HCT116 (cell line): ENCODE measurements at regions of chr6 and their contacts with region 1.

Region 1: GRCh38 chr6:136317021-136317694 is 27.5 kb upstream of the BCLAF1 start:
- DNase-seq: peak; percentile 71
- ATAC-seq: peak; percentile 95
- H3K4me3 ChIP-seq: no peak overlapping the region
- H3K27ac ChIP-seq: no peak overlapping the region
- H3K4me1 ChIP-seq: peaks cover 0 to 3% of the 10 kb centered on the region in 2 experiments; a peak in 1 of 4 replicates
- H3K27me3 ChIP-seq: no peaks in the 10 kb centered on the region
- CTCF ChIP-seq: peak; percentile 48 to 87 (median 77); a peak in 5 of 6 replicates
- POLR2A ChIP-seq: no peak
- RAD21 ChIP-seq: peak; percentile 84

Region 2: DNA sequence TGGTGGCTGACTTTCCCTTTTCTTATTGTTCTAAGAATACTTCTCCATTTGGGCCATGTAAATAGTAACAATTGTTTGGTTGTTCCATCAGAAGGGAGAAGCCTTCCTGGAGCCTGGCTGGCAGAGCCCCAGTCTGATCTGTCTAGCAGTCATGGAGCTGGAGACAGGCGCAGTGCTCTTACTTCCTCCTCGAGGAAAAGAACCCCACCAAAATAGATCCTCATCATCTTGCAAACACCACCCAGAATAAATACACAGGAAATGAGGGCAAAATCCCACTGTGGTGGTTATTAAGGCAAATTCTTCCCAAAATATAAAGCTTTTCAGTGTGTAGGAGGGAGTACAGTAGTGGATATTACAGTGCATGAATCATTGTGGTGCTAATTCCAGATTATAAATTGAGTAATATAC is 1804.2 kb before region 1 on chr6:
- CTCF ChIA-PET with region 1: no interaction called
- POLR2A ChIA-PET with region 1: no interaction called
- RAD21 ChIA-PET with region 1: no interaction called
- intact Hi-C with region 1: no loop called
- DNase-seq: no peak
- ATAC-seq: no peak
- H3K4me3 ChIP-seq: no peak overlapping the region
- H3K27ac ChIP-seq: no peak overlapping the region
- H3K4me1 ChIP-seq: peaks cover 0 to 25% of the 10 kb centered on the region in 2 experiments; a peak in 1 of 4 replicates
- H3K27me3 ChIP-seq: no peaks in the 10 kb centered on the region
- CTCF ChIP-seq: no peak
- POLR2A ChIP-seq: no peak
- RAD21 ChIP-seq: no peak

Region 3: DNA sequence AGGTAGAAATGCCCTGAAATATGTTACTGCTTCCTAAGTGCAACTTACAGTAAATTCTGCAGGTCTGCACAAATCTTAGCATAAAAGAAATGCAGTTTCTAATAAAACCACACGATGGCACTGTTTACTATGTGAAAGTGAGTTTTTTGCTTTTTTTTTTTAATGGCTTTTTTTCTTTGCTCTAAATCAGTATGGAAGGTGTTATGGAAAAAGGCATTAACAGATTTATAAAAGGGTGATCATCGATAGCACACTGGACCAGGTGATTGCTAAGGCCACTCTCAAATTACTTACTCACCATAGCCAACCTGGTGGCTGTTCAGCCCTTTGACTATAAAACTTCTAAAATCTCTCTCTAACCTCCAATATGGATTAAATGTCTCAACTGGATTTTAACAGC is 865.5 kb before region 1 on chr6:
- CTCF ChIA-PET with region 1: no interaction called
- POLR2A ChIA-PET with region 1: no interaction called
- RAD21 ChIA-PET with region 1: no interaction called
- intact Hi-C with region 1: loop called (anchors 5 kb)
- DNase-seq: peak; percentile 22
- ATAC-seq: no peak
- H3K4me3 ChIP-seq: no peak overlapping the region
- H3K27ac ChIP-seq: no peak overlapping the region
- H3K4me1 ChIP-seq: no peaks in the 10 kb centered on the region
- H3K27me3 ChIP-seq: no peaks in the 10 kb centered on the region
- CTCF ChIP-seq: peak; percentile 34 to 69 (median 43); a peak in 5 of 6 replicates
- POLR2A ChIP-seq: no peak
- RAD21 ChIP-seq: peak; percentile 63

Region 4: DNA sequence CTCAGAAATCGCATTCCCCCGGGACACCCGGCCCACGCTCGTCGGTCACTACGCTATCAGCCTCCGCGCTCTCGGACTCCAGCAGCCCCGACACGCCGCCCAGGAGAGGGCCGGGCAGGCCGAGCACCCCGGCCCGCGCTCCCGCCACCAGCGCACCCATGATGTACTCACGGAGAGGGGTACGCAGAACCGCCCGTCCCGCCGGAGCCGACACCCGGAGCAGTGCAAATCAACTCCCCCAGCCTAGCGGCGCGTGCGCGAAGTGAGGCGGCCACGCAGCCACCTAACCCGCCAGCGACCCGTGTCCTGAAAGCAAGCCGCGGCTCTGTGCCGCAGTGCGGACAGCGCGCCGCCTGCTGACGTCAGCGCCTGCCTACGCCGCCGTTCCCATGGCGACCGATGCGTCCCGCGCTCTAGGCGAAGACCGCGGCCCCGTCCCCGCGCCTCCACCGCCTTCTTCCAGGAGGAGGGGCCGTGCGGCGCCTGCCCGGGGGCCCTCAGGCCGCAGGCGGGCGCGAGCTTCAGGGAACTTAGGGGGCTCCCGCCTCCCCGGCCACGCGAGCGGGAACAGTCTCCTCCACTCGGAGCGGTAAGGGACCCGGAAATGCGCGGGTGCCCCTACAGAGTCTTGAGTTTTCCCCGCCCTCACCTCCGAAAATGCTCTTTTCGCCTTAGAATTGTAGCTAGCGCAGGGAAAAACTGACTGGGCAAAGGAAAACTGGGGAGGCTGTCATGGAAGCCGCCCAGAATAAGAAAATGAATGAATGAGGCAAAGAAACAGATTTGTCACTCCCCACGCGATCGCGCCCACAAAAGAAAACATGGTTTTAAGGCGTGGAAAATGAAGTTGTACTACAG is 819.5 kb before region 1 on chr6 and contains the start of gene AHI1:
- CTCF ChIA-PET with region 1: no interaction called
- POLR2A ChIA-PET with region 1: no interaction called
- RAD21 ChIA-PET with region 1: no interaction called
- intact Hi-C with region 1: loop called (anchors 5 kb)
- DNase-seq: peak; percentile 85
- ATAC-seq: peak; percentile 90
- H3K4me3 ChIP-seq: peak within 1 kb of the TSS; percentile 78 to 92
- H3K27ac ChIP-seq: peak within 1 kb of the TSS; percentile 90
- H3K4me1 ChIP-seq: peaks cover 4 to 18% of the 10 kb centered on the region in 2 experiments; a peak in 3 of 4 replicates
- H3K27me3 ChIP-seq: no peaks in the 10 kb centered on the region
- CTCF ChIP-seq: no peak
- POLR2A ChIP-seq: peak; percentile 59
- RAD21 ChIP-seq: no peak
- total RNA-seq, gene AHI1: 29.6 TPM

Region 5: DNA sequence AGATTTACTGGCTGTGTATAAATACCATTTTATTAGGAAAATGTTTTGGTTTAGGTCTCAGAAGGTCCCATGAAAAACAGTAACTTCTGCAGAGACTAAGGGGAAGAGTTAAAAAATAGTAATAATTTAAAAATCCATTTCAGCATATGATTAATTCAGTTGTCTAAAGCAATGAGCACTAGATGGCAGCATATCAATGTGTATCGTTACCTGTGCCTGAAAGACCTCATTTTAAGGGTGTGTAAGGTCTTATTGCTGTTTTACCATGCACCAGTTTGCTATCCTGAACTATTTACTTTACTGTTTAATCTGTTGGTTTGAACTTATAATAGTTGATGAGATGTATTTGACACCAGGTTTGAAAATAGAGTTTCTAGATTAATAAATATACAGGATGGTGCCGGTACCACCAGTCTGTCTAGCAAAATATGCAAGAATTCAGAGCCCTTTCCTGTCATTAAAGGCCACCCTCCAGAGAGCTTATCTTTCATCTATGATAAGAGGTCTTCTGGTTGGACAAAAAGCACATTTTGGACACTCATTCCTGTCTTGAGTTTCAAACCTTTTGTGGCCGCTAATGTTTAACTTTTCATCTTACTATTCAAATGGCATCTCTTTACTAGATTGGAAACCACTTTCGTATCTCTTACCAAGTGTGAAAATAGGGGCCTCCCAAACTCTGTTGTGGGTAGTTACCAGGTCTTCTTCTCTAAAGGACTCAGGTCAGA is 810.7 kb before region 1 on chr6:
- CTCF ChIA-PET with region 1: interaction called, 3 read pairs
- POLR2A ChIA-PET with region 1: no interaction called
- RAD21 ChIA-PET with region 1: no interaction called
- intact Hi-C with region 1: loop called (anchors 1 kb)
- DNase-seq: no peak
- ATAC-seq: peak; percentile 75
- H3K4me3 ChIP-seq: no peak overlapping the region
- H3K27ac ChIP-seq: no peak overlapping the region
- H3K4me1 ChIP-seq: no peaks in the 10 kb centered on the region
- H3K27me3 ChIP-seq: no peaks in the 10 kb centered on the region
- CTCF ChIP-seq: peak; percentile 35 to 69 (median 46); a peak in 4 of 6 replicates
- POLR2A ChIP-seq: no peak
- RAD21 ChIP-seq: peak; percentile 70